Gastrocnemius medialis (tissue), 4 donors: ENCODE measurements at regions of chr17 and their contacts with region 1.

Region 1: GRCh38 chr17:47895856-47896671 is at the start of gene SP2:
- DNase-seq: peak; percentile 100
- ATAC-seq: peak; percentile 92 to 95
- H3K4me3 ChIP-seq: peak within 1 kb of the TSS; percentile 75 to 86 (median 83)
- H3K27ac ChIP-seq: peak within 1 kb of the TSS; percentile 94 to 99 (median 96)
- H3K4me1 ChIP-seq: peaks cover 42 to 50% of the 10 kb centered on the region in 2 donors
- H3K27me3 ChIP-seq: no peaks in the 10 kb centered on the region
- CTCF ChIP-seq: peak in 3 of 5 experiments; percentile 15 to 59 (median 25)
- POLR2A ChIP-seq: peak; percentile 95 to 96
- total RNA-seq, gene SP2: 5.5 to 28.6 (median 7.0) TPM

Region 2: GRCh38 chr17:47831003-47831933 is 64.8 kb before region 1 on chr17 and contains the starts of genes LRRC46 and MRPL10:
- in situ Hi-C with region 1: no loop called
- intact Hi-C with region 1: loop called (anchors 2 kb)
- DNase-seq: peak; percentile 83 to 88
- ATAC-seq: peak; percentile 91 to 94
- H3K4me3 ChIP-seq: peak within 1 kb of the TSS; percentile 77 to 92 (median 80)
- H3K27ac ChIP-seq: peak within 1 kb of the TSS; percentile 73 to 79 (median 76)
- H3K4me1 ChIP-seq: peaks cover 15 to 22% of the 10 kb centered on the region in 2 donors
- H3K27me3 ChIP-seq: no peaks in the 10 kb centered on the region
- CTCF ChIP-seq: peak in 3 of 5 experiments; percentile 12 to 28 (median 22)
- POLR2A ChIP-seq: peak; percentile 79 to 91
- total RNA-seq, gene LRRC46: 0.20 TPM in 1 of 4 donors, not detected in the others
- total RNA-seq, gene MRPL10: 38.6 to 76.5 (median 49.6) TPM

Region 3: GRCh38 chr17:47970704-47971463 is 74.8 kb after region 1 on chr17 and contains the start of gene CDK5RAP3:
- in situ Hi-C with region 1: no loop called
- intact Hi-C with region 1: loop called (anchors 1 kb)
- DNase-seq: peak; percentile 100
- ATAC-seq: peak; percentile 98 to 99
- H3K4me3 ChIP-seq: peak within 1 kb of the TSS; percentile 77 to 100 (median 90)
- H3K27ac ChIP-seq: peak within 1 kb of the TSS; percentile 85 to 89 (median 88)
- H3K4me1 ChIP-seq: peaks cover 6 to 18% of the 10 kb centered on the region in 2 donors
- H3K27me3 ChIP-seq: no peaks in the 10 kb centered on the region
- CTCF ChIP-seq: peak; percentile 95 to 96 (median 96)
- POLR2A ChIP-seq: peak; percentile 71 to 74
- total RNA-seq, gene CDK5RAP3: 14.2 to 35.9 (median 27.8) TPM

Region 4: DNA sequence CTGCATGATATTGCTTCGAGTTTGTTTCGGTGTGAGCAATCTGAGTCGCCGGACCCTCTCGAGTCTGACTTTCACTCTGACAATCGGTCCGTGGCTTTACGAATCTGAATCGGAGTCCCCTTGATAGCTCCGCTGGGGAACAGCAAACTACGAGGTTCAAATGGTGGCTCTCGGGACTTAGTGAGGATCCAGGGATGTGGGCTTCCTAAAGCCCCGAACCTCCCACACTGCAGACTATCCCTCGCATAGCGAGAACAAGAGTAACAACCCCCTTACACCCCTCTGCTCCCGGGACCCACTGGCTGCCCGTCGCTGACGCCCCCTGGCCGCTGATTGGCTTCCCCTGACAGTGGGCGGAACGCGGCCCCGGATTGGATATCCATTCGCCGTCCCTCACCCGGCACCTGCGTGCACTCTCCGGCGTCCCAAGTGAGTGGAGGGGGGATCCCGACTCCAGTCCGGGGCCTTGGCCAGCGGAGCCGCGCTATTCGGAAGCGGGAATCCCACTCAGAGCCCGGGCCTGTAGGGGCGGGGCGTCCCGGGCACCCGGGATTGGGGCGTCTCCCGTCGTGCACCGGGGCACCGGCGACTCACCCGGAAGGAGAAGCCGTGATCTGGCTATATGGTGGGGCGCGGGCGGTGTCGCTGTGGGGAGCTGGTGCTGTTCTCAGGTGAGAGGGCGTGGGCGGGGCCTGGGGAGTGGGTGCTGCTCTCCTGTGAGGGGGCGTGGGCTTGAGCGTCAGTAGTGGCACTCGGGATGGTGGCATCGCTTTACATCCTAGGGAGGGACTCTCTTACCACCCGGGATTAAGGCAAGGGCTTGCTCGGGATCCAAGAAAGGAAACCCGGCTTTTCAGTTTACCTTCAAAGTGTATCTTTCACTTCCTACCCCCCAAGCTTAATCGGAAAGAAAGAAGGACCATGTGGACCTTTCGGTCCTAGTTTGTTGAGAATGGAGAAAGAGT is 211.4 kb after region 1 on chr17 and contains the start of gene SNX11:
- in situ Hi-C with region 1: no loop called
- intact Hi-C with region 1: loop called (anchors 5 kb)
- DNase-seq: peak; percentile 81 to 87
- ATAC-seq: peak; percentile 95 to 97
- H3K4me3 ChIP-seq: peak within 1 kb of the TSS; percentile 64 to 99 (median 94)
- H3K27ac ChIP-seq: peak within 1 kb of the TSS; percentile 92 to 100 (median 98)
- H3K4me1 ChIP-seq: peaks cover 14 to 18% of the 10 kb centered on the region in 2 donors
- H3K27me3 ChIP-seq: no peaks in the 10 kb centered on the region
- CTCF ChIP-seq: peak in 2 of 5 experiments; percentile 8 to 22
- POLR2A ChIP-seq: peak; percentile 67 to 70
- total RNA-seq, gene SNX11: 7.3 to 16.3 (median 9.6) TPM